Left colon (tissue), 2 donors: ENCODE measurements at regions of chr16 and their contacts with region 1.

Region 1: GRCh38 chr16:82389956-82390650 is 220.1 kb upstream of the MPHOSPH6 start:
- DNase-seq: no peak
- ATAC-seq: no peak

Region 2: GRCh38 chr16:83561876-83562275 is 1171.8 kb after region 1 on chr16:
- intact Hi-C with region 1: loop called in 1 of 2 experiments (anchors 10 kb)
- DNase-seq: no peak
- ATAC-seq: no peak